ENCODE measurements at regions of chr1 and their contacts with region 1.

Region 1: GRCh38 chr1:206766251-206766856 is 4.2 kb upstream of the IL19 start:
- DNase-seq: peak; percentile 48 to 90 (median 66)
- ATAC-seq: peak; percentile 84
- H3K4me3 ChIP-seq: no peak overlapping the region
- H3K4me3 Mint-ChIP-seq: peak overlapping the region; percentile 84
- H3K27ac ChIP-seq: no peak overlapping the region
- H3K27ac Mint-ChIP-seq: peak overlapping the region; percentile 88
- H3K4me1 ChIP-seq: peaks cover 64% of the 10 kb centered on the region
- H3K4me1 Mint-ChIP-seq: peaks cover 74% of the 10 kb centered on the region
- H3K27me3 ChIP-seq: no peaks in the 10 kb centered on the region
- H3K27me3 Mint-ChIP-seq: no peaks in the 10 kb centered on the region
- CTCF ChIP-seq: no peak

Region 2: DNA sequence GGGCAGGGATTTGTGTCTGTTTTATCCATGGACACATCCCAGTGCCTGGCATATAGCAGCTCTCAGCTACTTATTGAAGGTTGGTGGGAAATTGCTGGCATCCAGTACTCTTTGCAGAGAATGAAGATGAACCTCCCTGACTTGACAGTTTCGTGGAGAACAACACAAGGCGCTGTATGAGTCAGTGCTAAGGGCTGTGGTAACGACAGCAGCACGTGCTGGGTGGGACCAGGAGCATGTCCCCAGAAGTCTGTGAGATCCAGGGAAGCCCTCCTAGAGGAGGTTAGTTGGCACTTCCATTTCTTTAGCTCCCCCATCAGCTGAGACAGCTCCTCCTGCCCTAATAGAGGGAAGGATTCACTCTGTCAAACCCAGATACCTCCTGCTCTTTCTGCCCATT is 21.7 kb before region 1 on chr1:
- CTCF ChIA-PET with region 1: no interaction called
- POLR2A ChIA-PET with region 1: interaction called, 5 read pairs
- intact Hi-C with region 1: loop called (anchors 2 to 5 kb)
- DNase-seq: peak in 2 of 14 experiments; percentile 35 to 56
- ATAC-seq: no peak
- H3K4me3 ChIP-seq: no peak overlapping the region
- H3K4me3 Mint-ChIP-seq: no peak overlapping the region
- H3K27ac ChIP-seq: no peak overlapping the region
- H3K27ac Mint-ChIP-seq: peak overlapping the region; percentile 5
- H3K4me1 ChIP-seq: peaks cover 22% of the 10 kb centered on the region
- H3K4me1 Mint-ChIP-seq: peaks cover 62% of the 10 kb centered on the region
- H3K27me3 ChIP-seq: no peaks in the 10 kb centered on the region
- H3K27me3 Mint-ChIP-seq: no peaks in the 10 kb centered on the region
- CTCF ChIP-seq: no peak

Region 3: GRCh38 chr1:206784471-206784903 is 18.1 kb after region 1 on chr1:
- CTCF ChIA-PET with region 1: interaction called, 5 read pairs
- POLR2A ChIA-PET with region 1: interaction called, 32 read pairs
- intact Hi-C with region 1: loop called in 1 of 2 experiments (anchors 2 kb)
- DNase-seq: peak; percentile 47 to 86 (median 66)
- ATAC-seq: peak; percentile 92
- H3K4me3 ChIP-seq: peak overlapping the region; percentile 15
- H3K4me3 Mint-ChIP-seq: peak overlapping the region; percentile 40
- H3K27ac ChIP-seq: peak overlapping the region in 1 of 2 donors; percentile 49
- H3K27ac Mint-ChIP-seq: peak overlapping the region; percentile 74
- H3K4me1 ChIP-seq: peaks cover 45% of the 10 kb centered on the region
- H3K4me1 Mint-ChIP-seq: peaks cover 60% of the 10 kb centered on the region
- H3K27me3 ChIP-seq: no peaks in the 10 kb centered on the region
- H3K27me3 Mint-ChIP-seq: no peaks in the 10 kb centered on the region
- CTCF ChIP-seq: no peak